ENCODE measurements at regions of chr4 and their contacts with region 1.

Region 1: DNA sequence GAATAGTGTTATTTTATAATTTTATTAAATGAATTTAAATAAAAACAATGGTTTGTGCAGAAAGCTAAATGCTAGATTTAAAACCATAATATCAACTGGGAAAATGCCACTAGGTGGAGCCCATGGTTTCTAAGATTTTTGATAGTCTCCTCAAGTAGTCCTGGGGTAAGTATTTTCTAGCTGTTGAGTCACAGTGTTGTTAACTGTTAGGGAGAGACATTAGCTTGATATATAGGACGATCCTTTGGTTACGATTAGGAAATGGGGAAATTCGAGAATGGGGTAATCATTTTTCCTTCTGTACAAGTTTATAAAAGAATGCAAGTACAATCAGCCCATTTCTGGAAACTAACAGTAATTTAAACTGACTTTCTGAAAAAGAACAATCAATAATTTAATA is 378.4 kb downstream of the ANKRD50 start:
- DNase-seq: peak; percentile 65
- H3K4me3 ChIP-seq: no peak overlapping the region
- H3K27ac ChIP-seq: no peak overlapping the region
- H3K4me1 ChIP-seq: peaks cover 5% of the 10 kb centered on the region
- H3K27me3 ChIP-seq: no peaks in the 10 kb centered on the region
- CTCF ChIP-seq: peak; percentile 27 to 61 (median 39)
- POLR2A ChIP-seq: no peak

Region 2: GRCh38 chr4:125283707-125284279 is 949.7 kb after region 1 on chr4:
- intact Hi-C with region 1: loop called (anchors 10 kb)
- DNase-seq: no peak
- H3K4me3 ChIP-seq: no peak overlapping the region
- H3K27ac ChIP-seq: no peak overlapping the region
- H3K4me1 ChIP-seq: no peaks in the 10 kb centered on the region
- H3K27me3 ChIP-seq: no peaks in the 10 kb centered on the region
- CTCF ChIP-seq: peak; percentile 18 to 72 (median 30)
- POLR2A ChIP-seq: no peak

Measured in testis (tissue), 5 donors.